Left cardiac atrium (tissue), 4 donors: ENCODE measurements at regions of chr13 and their contacts with region 1.

Region 1: GRCh38 chr13:23621316-23621645 is 51.1 kb downstream of the TNFRSF19 start:
- DNase-seq: no peak
- ATAC-seq: peak in 1 of 2 donors; percentile 91

Region 2: GRCh38 chr13:23656637-23657371 is 35.5 kb after region 1 on chr13:
- intact Hi-C with region 1: loop called in 1 of 2 experiments (anchors 5 kb)
- DNase-seq: no peak
- ATAC-seq: peak; percentile 48 to 61